Calu3 (cell line): ENCODE measurements at regions of chr1 and their contacts with region 1.

Region 1: GRCh38 chr1:219876798-219877209 is 51.6 kb downstream of the SLC30A10 start:
- DNase-seq: peak; percentile 30
- H3K4me3 Mint-ChIP-seq: no peak overlapping the region
- H3K27ac Mint-ChIP-seq: no peak overlapping the region
- H3K4me1 Mint-ChIP-seq: no peaks in the 10 kb centered on the region
- H3K27me3 Mint-ChIP-seq: no peaks in the 10 kb centered on the region
- CTCF ChIP-seq: peak; percentile 34

Region 2: DNA sequence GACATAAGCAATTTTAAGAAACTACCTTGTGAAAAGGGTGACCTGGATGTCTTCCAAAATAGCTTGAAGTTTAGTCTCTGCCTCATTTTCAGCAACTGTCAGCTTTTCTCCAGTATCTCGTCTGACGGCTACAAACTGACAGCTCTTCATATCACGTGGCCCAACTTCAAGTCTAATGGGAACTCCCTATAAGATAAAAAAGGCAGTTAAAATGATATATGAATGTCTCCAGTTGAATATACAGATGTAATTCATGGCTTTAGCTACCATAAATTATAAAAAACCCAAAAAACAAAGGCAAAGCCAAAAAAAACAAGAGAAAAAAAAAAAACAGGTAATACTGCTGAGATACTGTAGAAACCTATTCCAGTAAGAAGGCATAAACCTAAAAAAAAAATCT is 96.4 kb after region 1 on chr1:
- CTCF ChIA-PET with region 1: no interaction called
- intact Hi-C with region 1: loop called (anchors 5 kb)
- DNase-seq: no peak
- H3K4me3 Mint-ChIP-seq: no peak overlapping the region
- H3K27ac Mint-ChIP-seq: no peak overlapping the region
- H3K4me1 Mint-ChIP-seq: no peaks in the 10 kb centered on the region
- H3K27me3 Mint-ChIP-seq: no peaks in the 10 kb centered on the region
- CTCF ChIP-seq: no peak